Activated T-helper 1 cell treated with anti-CD3 and anti-CD28 coated beads, Interleukin-12 subunit alpha, Interleukin-12 subunit beta, Interleukin-2, Interleukin-4 antibody, amounts not matched to agents 30 ng/mL and 10 ng/mL and 1 ng/mL, durations not matched to agents 14 hours and 24 hours and 36 hours (primary cell): ENCODE measurements at regions of chrX and their contacts with region 1.

Region 1: GRCh38 chrX:47560831-47561652 is at the start of gene ARAF:
- DNase-seq: peak; percentile 93
- H3K4me3 Mint-ChIP-seq: peak within 1 kb of the TSS; percentile 92
- H3K27ac Mint-ChIP-seq: peak within 1 kb of the TSS; percentile 99
- H3K4me1 Mint-ChIP-seq: peaks cover 40% of the 10 kb centered on the region
- H3K27me3 Mint-ChIP-seq: no peaks in the 10 kb centered on the region
- total RNA-seq, gene ARAF: 75.9 and 84.4 TPM in 2 replicates

Region 2: DNA sequence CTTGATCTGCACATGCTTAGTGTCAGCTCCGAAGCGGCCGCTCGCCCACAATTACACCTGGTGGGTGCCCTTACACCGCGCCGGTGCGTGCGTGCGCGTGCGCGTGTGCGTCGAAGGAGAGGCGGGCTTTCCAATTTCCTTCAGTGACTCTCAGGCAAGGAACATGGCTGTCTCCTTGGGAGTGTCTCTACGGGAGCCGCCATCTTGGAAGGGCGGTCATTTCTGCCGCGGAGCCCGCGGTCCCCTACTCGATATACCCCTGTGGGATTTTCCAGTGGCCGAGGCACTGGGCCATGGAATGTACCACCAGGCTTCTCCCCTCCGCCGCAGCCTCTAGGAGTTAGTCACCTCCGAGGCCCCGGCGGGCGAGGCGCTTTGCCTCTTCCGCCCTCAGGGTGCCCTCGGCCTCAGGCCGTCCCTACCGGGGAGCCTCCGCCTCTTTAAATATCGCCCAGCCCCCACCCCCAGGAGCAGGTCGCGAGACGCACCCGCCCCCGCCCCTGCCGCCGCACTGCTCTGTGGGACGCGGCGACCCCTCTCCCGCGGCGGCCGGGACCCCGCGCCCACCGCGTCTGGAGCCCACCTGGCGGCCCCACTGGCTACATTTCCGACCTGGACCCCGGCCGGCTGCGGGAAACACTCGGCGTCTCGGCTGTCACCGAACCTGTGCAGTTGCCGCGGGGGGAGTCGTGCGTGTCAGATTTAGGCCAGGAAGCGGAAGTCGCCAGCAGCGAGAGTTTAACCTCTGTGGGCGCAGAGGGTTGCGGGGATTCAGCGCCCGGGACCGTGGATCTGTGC is 78.3 kb before region 1 on chrX and contains the start of gene ZNF41:
- intact Hi-C with region 1: loop called (anchors 1 kb)
- DNase-seq: peak; percentile 63
- H3K4me3 Mint-ChIP-seq: peak within 1 kb of the TSS; percentile 92
- H3K27ac Mint-ChIP-seq: peak within 1 kb of the TSS; percentile 91
- H3K4me1 Mint-ChIP-seq: peaks cover 26% of the 10 kb centered on the region
- H3K27me3 Mint-ChIP-seq: no peaks in the 10 kb centered on the region
- total RNA-seq, gene ZNF41: 10.7 and 10.9 TPM in 2 replicates

Region 3: DNA sequence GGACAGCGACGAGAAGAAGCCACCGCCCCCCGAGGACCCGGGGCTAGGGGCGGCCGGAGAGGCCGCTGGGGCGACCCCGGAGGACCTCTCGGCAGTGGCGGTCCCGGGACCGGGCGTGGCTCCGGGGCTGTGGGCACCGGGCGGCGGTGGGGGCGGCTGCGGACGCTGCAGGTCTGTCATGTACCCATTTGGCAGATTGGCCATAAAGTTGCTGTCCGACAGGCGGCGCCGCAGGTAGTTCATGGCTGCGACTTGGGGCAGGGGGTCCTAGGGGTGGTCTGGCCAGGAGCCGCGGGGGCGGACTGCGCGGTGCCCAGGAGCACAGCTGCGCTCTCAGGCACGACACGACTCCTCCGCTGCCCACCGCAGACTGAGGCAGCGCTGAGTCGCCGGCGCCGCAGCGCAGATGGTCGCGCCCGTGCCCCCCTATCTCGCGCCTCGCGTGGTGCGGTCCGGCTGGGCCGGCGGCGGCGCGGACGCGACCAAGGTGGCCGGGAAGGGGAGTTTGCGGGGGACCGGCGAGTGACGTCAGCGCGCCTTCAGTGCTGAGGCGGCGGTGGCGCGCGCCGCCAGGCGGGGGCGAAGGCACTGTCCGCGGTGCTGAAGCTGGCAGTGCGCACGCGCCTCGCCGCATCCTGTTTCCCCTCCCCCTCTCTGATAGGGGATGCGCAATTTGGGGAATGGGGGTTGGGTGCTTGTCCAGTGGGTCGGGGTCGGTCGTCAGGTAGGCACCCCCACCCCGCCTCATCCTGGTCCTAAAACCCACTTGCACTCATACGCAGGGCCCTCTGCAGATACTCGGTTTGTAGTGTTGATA is 58.7 kb after region 1 on chrX and contains the start of gene SYN1:
- intact Hi-C with region 1: loop called (anchors 5 kb)
- DNase-seq: peak; percentile 75
- H3K4me3 Mint-ChIP-seq: peak within 1 kb of the TSS; percentile 64
- H3K27ac Mint-ChIP-seq: peak within 1 kb of the TSS; percentile 65
- H3K4me1 Mint-ChIP-seq: peaks cover 19% of the 10 kb centered on the region
- H3K27me3 Mint-ChIP-seq: peaks cover 33% of the 10 kb centered on the region
- total RNA-seq, gene SYN1: 0.21 and 0.22 TPM in 2 replicates

Region 4: GRCh38 chrX:47658684-47659515 is 97.9 kb after region 1 on chrX and contains the start of gene UXT:
- intact Hi-C with region 1: loop called (anchors 2 kb)
- DNase-seq: peak; percentile 89
- H3K4me3 Mint-ChIP-seq: peak within 1 kb of the TSS; percentile 90
- H3K27ac Mint-ChIP-seq: peak within 1 kb of the TSS; percentile 98
- H3K4me1 Mint-ChIP-seq: peaks cover 31% of the 10 kb centered on the region
- H3K27me3 Mint-ChIP-seq: no peaks in the 10 kb centered on the region
- total RNA-seq, gene UXT: 163 and 173 TPM in 2 replicates

Region 5: DNA sequence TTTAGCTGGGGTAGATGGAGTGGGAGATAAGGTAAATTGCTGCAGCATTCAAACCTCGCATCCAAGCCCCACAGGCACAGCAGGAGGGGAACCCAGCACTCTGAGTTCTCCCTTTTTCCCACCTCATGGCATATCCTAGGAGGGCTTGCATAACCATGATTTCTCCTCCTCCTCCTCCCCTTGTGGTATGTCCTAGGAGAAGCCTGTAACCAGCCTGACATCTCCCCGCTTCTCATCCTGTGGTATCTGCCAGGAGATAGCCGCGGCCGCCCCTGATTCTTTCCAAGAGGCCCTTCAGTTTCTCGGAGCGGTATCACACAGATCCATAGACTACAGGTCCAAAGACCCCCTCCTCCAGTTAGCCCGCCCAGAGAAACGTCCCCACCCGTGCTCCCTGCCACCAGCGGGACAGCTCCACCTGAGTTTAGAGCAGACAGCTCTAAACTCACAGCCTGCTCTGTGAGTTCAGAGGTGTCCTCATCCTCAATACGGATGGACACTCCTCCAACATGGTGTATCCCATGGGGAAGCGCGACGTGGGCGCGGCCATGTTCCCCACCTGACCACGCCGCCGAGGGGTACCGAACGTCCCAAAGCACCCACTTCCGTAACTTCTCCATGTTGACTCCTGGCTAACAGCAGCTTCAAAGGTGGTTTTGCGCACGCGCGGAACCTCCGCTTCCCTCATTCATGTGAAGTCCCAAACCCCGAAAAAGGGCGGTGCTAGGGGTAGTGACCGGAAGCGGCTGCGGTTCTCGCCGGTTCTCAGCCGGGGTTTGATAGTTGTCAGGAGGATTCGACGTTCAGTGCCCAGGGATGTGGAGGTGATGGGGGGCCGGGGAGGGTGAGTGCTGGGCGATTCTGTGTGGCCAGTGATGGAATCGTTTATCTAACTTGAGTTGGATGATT is 275.4 kb after region 1 on chrX and contains the start of gene ZNF81:
- intact Hi-C with region 1: loop called (anchors 5 kb)
- DNase-seq: peak; percentile 87
- H3K4me3 Mint-ChIP-seq: peak within 1 kb of the TSS; percentile 98
- H3K27ac Mint-ChIP-seq: peak within 1 kb of the TSS; percentile 97
- H3K4me1 Mint-ChIP-seq: peaks cover 13% of the 10 kb centered on the region
- H3K27me3 Mint-ChIP-seq: no peaks in the 10 kb centered on the region
- total RNA-seq, gene ZNF81: 5.9 and 9.2 TPM in 2 replicates